GM12878 (cell line): ENCODE measurements at regions of chr11 and their contacts with region 1.

Region 1: GRCh38 chr11:123580557-123581275 is 73.7 kb downstream of the SCN3B start:
- DNase-seq: no peak
- ATAC-seq: peak; percentile 93
- H3K4me3 ChIP-seq: no peak overlapping the region
- H3K27ac ChIP-seq: no peak overlapping the region
- H3K4me1 ChIP-seq: peaks cover 9% of the 10 kb centered on the region
- H3K27me3 ChIP-seq: no peaks in the 10 kb centered on the region
- CTCF ChIP-seq: peak; percentile 94 to 100 (median 96)
- EP300 ChIP-seq: no peak
- POLR2A ChIP-seq: no peak
- RAD21 ChIP-seq: peak; percentile 71

Region 2: DNA sequence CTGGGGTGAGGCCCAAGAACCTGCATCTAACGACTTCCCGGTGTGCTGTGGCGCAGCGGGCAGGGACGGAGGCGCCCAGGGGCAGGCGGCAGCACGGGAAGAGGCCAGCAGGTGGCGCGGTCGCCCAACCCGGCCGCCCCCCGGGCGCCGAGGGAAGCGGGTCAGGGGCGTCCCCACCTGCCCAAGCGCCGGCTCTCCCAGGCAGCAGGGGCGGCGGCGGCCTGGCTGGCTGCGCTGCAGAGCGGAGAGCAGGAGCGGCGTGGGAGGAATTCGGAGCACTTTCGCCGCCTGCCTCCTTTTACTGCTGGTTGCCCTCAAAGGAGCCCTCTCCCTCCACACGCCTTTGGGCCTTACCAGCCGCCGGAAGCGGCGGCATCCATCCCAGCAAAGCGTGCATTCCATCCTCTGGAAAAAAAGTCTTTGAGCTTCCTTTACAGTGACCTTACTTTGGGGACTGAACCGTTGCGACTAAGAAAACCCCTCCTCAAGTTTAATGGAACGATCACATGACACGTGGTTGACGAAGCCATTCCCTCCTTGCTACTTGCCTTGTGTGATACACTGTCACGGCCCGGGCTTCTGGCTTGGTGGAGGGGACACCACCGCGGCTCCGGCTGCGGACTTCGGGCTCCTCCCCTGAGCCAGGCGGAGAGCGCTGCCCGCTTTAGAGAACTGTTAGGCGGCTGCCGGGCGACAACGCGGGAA is 278.9 kb before region 1 on chr11:
- CTCF ChIA-PET with region 1: interaction called, 10 read pairs
- POLR2A ChIA-PET with region 1: no interaction called
- RAD21 ChIA-PET with region 1: interaction called, 5 read pairs
- SMC1A ChIA-PET with region 1: interaction called, 4 read pairs
- in situ Hi-C with region 1: no loop called
- intact Hi-C with region 1: no loop called
- DNase-seq: peak; percentile 32
- ATAC-seq: peak; percentile 83
- H3K4me3 ChIP-seq: peak overlapping the region; percentile 62; the same call in 1 of the 2 replicates
- H3K27ac ChIP-seq: peak overlapping the region; percentile 75
- H3K4me1 ChIP-seq: peaks cover 29% of the 10 kb centered on the region
- H3K27me3 ChIP-seq: no peaks in the 10 kb centered on the region
- CTCF ChIP-seq: peak; percentile 76 to 93 (median 84); a peak in 5 of 6 replicates
- EP300 ChIP-seq: no peak
- POLR2A ChIP-seq: no peak; the same call in 1 of the 2 replicates
- RAD21 ChIP-seq: peak; percentile 86

Region 3: DNA sequence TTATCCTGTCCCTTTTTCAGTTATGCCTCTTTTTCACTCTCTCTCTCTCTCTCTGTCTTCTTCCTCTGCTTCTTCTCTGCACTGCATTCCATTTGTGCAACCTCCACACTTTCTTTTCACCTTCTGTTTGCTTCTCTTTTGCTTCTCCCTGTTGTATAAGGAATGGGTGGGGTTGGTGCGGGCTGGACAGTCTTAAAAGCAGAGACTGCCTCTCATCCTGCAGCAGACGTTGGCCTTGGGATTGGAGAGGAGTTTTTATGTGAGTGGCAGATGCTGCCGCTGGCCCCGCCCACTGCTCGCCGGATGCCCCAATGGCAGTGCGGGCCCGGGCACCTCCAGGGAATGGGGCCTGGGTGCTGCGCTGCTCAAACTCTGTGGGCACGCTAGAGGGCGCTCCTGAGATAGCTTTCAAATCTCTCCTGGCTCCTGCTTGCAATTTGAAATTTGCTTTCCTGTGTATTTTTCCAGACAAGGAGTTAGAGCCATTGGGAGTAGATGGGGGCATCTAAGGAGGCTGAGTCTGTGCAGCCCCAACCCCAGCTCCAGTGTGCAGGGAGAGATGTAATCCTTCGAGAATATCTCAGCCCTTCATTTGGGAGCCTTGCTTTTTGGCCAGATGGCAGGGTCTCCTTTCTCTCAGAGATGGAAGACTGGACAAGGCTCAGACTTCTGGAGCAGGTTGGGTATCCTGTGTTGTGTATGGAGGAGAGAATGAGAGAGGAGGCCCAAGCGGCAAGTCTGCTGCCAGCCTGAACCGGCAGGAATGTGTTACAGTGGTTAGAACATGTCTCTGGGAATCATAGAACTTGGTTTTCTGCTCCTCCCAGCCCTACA is 69.5 kb before region 1 on chr11:
- CTCF ChIA-PET with region 1: interaction called, 42 read pairs
- POLR2A ChIA-PET with region 1: no interaction called
- RAD21 ChIA-PET with region 1: interaction called, 23 read pairs
- SMC1A ChIA-PET with region 1: interaction called, 30 read pairs
- in situ Hi-C with region 1: no loop called
- intact Hi-C with region 1: loop called (anchors 1 kb)
- DNase-seq: no peak
- ATAC-seq: peak; percentile 99
- H3K4me3 ChIP-seq: no peak overlapping the region
- H3K27ac ChIP-seq: no peak overlapping the region
- H3K4me1 ChIP-seq: peaks cover 13% of the 10 kb centered on the region
- H3K27me3 ChIP-seq: no peaks in the 10 kb centered on the region
- CTCF ChIP-seq: peak; percentile 85 to 90 (median 89)
- EP300 ChIP-seq: no peak
- POLR2A ChIP-seq: no peak
- RAD21 ChIP-seq: peak; percentile 78

Region 4: GRCh38 chr11:123536690-123537437 is 43.9 kb before region 1 on chr11:
- CTCF ChIA-PET with region 1: interaction called, 11 read pairs
- POLR2A ChIA-PET with region 1: no interaction called
- RAD21 ChIA-PET with region 1: interaction called, 3 read pairs
- SMC1A ChIA-PET with region 1: interaction called, 4 read pairs
- in situ Hi-C with region 1: no loop called
- intact Hi-C with region 1: no loop called
- DNase-seq: no peak
- ATAC-seq: peak; percentile 21; the same call in 1 of the 3 replicates
- H3K4me3 ChIP-seq: no peak overlapping the region
- H3K27ac ChIP-seq: no peak overlapping the region
- H3K4me1 ChIP-seq: no peaks in the 10 kb centered on the region
- H3K27me3 ChIP-seq: no peaks in the 10 kb centered on the region
- CTCF ChIP-seq: no peak
- EP300 ChIP-seq: no peak
- POLR2A ChIP-seq: no peak
- RAD21 ChIP-seq: no peak

Region 5: DNA sequence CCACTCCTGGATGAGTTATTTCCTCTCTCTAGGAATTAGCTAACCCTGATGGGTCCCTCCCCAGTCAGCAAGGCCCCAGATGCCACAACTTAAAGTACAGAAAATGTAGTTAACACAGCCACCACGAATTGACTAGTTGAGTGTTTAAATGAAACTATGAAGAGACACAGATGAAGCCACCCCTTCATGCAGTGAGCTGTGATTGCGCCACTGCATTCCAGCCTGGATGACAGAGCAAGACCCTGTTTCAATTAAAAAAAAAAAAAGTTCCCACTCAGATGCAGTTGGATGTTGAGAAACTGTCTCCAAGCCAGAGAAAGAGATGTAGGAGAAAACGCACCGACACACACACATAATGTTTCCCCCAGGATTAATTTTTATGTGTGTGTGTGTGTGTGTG is 20.4 kb after region 1 on chr11:
- CTCF ChIA-PET with region 1: interaction called, 11 read pairs
- POLR2A ChIA-PET with region 1: no interaction called
- RAD21 ChIA-PET with region 1: no interaction called
- SMC1A ChIA-PET with region 1: no interaction called
- in situ Hi-C with region 1: no loop called
- intact Hi-C with region 1: no loop called
- DNase-seq: no peak
- ATAC-seq: no peak
- H3K4me3 ChIP-seq: no peak overlapping the region
- H3K27ac ChIP-seq: no peak overlapping the region
- H3K4me1 ChIP-seq: no peaks in the 10 kb centered on the region
- H3K27me3 ChIP-seq: no peaks in the 10 kb centered on the region
- CTCF ChIP-seq: no peak
- EP300 ChIP-seq: no peak
- POLR2A ChIP-seq: no peak
- RAD21 ChIP-seq: no peak

Region 6: DNA sequence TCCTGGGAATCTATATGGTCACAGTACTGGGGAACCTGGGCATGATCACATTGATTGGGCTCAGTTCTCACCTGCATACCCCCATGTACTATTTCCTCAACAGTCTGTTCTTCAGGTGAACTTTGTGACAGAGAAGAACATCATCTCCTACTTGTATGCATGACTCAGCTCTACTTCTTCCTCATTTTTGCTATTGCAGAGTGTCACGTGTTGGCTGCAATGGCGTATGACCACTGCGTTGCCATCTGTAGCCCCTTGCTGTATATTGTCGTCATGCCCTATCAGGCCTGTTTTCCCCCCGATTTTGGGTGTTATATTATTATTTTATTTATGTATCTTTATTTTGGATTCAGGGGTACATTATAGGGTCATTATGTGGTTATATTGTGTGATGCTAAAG is 657.8 kb after region 1 on chr11:
- CTCF ChIA-PET with region 1: no interaction called
- POLR2A ChIA-PET with region 1: no interaction called
- RAD21 ChIA-PET with region 1: no interaction called
- SMC1A ChIA-PET with region 1: no interaction called
- in situ Hi-C with region 1: no loop called
- intact Hi-C with region 1: no loop called
- DNase-seq: no peak
- ATAC-seq: no peak
- H3K4me3 ChIP-seq: no peak overlapping the region
- H3K27ac ChIP-seq: no peak overlapping the region
- H3K4me1 ChIP-seq: no peaks in the 10 kb centered on the region
- H3K27me3 ChIP-seq: no peaks in the 10 kb centered on the region
- CTCF ChIP-seq: no peak
- EP300 ChIP-seq: no peak
- POLR2A ChIP-seq: no peak
- RAD21 ChIP-seq: no peak